ENCODE measurements at regions of chr3 and their contacts with region 1.

Region 1: DNA sequence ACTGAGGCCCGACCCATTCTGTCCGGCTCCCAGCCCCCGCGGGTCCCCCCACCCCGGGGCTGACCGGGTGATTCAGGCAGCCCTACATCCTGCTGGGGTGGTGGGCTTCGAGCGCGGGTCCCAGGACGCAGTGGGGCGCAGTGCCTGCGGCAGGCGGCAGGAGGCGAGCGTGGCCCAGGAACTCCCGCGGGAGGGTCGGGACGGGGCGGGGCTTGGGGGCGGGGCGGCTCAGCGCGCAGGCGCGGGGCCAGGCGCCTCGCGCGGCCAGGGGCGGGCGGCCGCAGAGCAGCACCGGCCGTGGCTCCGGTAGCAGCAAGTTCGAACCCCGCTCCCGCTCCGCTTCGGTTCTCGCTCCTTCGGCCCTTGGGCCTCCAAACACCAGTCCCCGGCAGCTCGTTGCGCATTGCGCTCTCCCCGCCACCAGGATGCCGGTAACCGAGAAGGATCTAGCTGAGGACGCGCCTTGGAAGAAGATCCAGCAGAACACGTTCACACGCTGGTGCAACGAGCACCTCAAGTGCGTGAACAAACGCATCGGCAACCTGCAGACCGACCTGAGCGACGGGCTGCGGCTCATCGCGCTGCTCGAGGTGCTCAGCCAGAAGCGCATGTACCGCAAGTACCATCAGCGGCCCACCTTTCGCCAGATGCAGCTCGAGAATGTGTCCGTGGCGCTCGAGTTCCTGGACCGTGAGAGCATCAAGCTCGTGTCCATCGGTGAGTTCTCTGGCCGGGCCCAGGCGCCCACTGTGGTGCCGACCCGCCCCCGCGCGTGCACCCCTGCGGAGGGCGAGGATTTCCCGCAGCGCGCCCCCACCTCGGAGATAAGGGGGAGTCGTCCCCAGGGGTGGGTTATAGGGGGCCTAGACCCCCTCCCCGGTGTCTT is at the start of gene FLNB:
- DNase-seq: peak; percentile 67 to 90 (median 86)
- ATAC-seq: peak; percentile 88 to 90
- H3K4me3 ChIP-seq: peak within 1 kb of the TSS; percentile 91
- H3K27ac ChIP-seq: peak within 1 kb of the TSS; percentile 86
- H3K4me1 ChIP-seq: peaks cover 9% of the 10 kb centered on the region
- H3K27me3 ChIP-seq: no peaks in the 10 kb centered on the region
- total RNA-seq, gene FLNB: 22.9 to 44.9 (median 29.0) TPM

Region 2: GRCh38 chr3:58170376-58170775 is 162.0 kb after region 1 on chr3:
- intact Hi-C with region 1: loop called (anchors 2 to 10 kb)
- DNase-seq: no peak
- ATAC-seq: no peak
- H3K4me3 ChIP-seq: no peak overlapping the region
- H3K27ac ChIP-seq: no peak overlapping the region
- H3K4me1 ChIP-seq: peaks cover 4% of the 10 kb centered on the region
- H3K27me3 ChIP-seq: no peaks in the 10 kb centered on the region

Region 3: GRCh38 chr3:58177747-58178527 is 169.6 kb after region 1 on chr3:
- intact Hi-C with region 1: loop called in 3 of 4 experiments (anchors 5 to 10 kb)
- DNase-seq: peak; percentile 91 to 97 (median 95)
- ATAC-seq: peak; percentile 78 to 84
- H3K4me3 ChIP-seq: peak overlapping the region; percentile 37
- H3K27ac ChIP-seq: no peak overlapping the region
- H3K4me1 ChIP-seq: peaks cover 3% of the 10 kb centered on the region
- H3K27me3 ChIP-seq: no peaks in the 10 kb centered on the region